ENCODE measurements at regions of chr1 and their contacts with region 1.

Region 1: DNA sequence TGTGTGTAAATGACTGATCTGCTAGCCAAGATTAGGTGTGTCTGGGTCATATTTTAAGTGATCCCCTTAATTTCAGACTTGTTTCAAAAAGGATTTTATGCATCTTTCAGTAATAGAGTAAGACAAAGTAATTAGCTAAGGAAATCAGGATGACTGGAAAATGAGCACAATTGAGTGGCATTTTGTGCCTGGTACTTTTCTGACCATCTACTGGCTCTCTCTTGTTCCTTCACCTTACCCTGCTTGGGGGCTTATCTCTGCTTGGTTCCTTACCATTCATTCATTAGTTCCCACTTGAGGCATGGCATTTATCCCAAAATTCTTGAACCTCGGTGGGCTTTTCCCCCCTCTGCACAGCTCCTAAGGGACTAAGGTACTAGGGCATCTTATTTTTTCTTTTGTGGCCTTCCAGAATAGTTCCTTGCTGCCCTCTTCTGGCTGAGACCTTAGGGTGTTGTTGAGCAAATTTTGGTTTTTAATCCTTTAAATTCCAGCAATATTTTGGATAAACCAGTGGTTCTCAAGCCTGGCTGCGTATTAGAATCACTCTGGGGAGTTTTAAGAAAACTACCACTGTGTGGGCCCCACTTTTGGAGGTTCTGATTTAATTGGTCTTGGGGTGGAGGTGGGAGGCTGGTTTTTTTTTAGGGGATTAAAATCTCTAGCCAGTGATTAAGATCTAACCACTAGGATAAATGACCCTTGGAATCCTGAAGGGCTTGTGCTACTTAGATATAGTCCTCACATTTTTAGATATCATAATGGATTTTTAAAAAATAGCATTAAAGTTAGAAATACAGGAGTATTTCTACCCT is 50.8 kb downstream of the HS2ST1 start:
- DNase-seq: peak; percentile 23
- ATAC-seq: peak; percentile 72
- H3K4me3 ChIP-seq: no peak overlapping the region
- H3K27ac ChIP-seq: no peak overlapping the region
- H3K4me1 ChIP-seq: no peaks in the 10 kb centered on the region
- H3K27me3 ChIP-seq: no peaks in the 10 kb centered on the region
- CTCF ChIP-seq: peak; percentile 54 to 77 (median 72); a peak in 5 of 6 replicates
- POLR2A ChIP-seq: no peak
- RAD21 ChIP-seq: peak; percentile 81

Region 2: DNA sequence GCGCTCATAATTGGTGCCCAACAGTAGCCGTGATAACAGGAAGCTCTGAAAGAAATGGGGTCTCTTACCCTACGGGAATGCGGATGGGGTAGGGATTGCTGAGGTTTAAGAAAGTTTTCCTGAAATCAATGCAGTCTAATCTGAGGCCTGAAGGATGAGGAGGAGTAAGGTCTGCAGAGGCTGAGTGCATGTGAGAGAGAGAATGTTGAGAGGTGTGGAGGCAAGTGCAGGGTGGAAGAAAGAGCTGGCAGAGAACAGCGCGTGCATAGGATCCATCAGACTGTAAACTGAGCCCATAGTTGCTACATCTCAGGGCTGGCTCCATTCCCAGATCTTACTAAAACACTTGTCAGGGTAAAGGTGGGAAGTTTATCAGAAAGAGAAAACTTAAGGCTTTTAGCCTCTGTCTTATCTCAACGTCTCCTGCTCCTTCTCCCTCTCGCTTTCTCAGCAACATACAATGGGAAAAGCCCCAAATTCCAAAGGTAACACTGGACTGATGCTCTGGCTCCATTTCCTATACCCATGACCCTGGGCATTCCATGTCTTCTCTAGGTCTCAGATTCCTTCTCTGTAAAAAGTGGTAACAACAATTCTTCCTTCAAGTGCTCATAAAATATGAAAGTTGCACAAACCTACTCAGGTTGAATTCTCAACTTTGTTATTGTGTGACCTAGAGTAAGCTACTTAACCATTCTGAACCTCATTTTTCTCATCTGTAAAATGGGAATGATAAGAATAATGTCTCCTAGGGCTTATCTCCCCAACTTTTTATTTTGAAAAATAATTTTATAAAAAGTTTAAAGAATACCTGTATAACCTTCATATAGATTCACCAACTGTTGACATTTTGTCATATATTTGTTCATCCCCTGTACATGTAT is 185.7 kb before region 1 on chr1:
- CTCF ChIA-PET with region 1: interaction called, 11 read pairs
- POLR2A ChIA-PET with region 1: no interaction called
- RAD21 ChIA-PET with region 1: interaction called in 1 of 2 experiments, 3 read pairs
- intact Hi-C with region 1: loop called (anchors 1 kb)
- DNase-seq: no peak
- ATAC-seq: no peak
- H3K4me3 ChIP-seq: no peak overlapping the region
- H3K27ac ChIP-seq: no peak overlapping the region
- H3K4me1 ChIP-seq: peaks cover 10 to 17% of the 10 kb centered on the region in 2 experiments; a peak in 3 of 4 replicates
- H3K27me3 ChIP-seq: no peaks in the 10 kb centered on the region
- CTCF ChIP-seq: no peak
- POLR2A ChIP-seq: no peak
- RAD21 ChIP-seq: no peak

Region 3: GRCh38 chr1:86833461-86834215 is 131.6 kb before region 1 on chr1:
- CTCF ChIA-PET with region 1: interaction called, 15 read pairs
- POLR2A ChIA-PET with region 1: no interaction called
- RAD21 ChIA-PET with region 1: no interaction called
- intact Hi-C with region 1: loop called (anchors 1 kb)
- DNase-seq: peak; percentile 79
- ATAC-seq: peak; percentile 98
- H3K4me3 ChIP-seq: no peak overlapping the region
- H3K27ac ChIP-seq: no peak overlapping the region
- H3K4me1 ChIP-seq: no peaks in the 10 kb centered on the region; a peak in 1 of 4 replicates
- H3K27me3 ChIP-seq: no peaks in the 10 kb centered on the region
- CTCF ChIP-seq: peak; percentile 43 to 80 (median 66)
- POLR2A ChIP-seq: no peak
- RAD21 ChIP-seq: peak; percentile 85

Region 4: DNA sequence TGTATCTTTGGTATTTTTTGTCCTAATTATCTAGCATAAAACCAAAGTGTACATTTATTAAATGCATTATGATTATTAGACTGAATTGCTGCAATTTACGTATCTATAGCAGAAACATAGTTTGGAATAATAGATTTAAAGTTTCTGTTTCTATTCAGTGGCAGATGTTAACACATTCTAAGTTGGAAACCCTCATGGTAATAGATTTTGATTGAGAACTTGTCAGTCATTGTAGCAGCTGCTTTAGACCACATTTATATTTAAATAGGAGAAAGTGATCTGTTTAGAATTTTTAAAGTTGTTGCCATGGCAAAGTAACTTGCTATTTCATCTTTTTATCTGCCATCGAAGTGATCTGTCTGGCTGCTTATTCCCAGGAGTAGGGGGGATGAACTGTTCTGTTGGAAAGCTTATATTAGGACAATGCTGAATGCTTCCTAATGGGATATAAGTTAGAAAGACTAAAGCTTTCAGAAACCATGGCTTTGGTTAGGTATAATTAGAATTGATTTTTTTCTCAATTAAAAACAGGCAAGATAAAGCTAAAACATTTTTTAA is 10.9 kb after region 1 on chr1:
- CTCF ChIA-PET with region 1: interaction called, 11 read pairs
- POLR2A ChIA-PET with region 1: no interaction called
- RAD21 ChIA-PET with region 1: no interaction called
- intact Hi-C with region 1: no loop called
- DNase-seq: no peak
- ATAC-seq: no peak
- H3K4me3 ChIP-seq: no peak overlapping the region
- H3K27ac ChIP-seq: no peak overlapping the region
- H3K4me1 ChIP-seq: no peaks in the 10 kb centered on the region; a peak in 1 of 4 replicates
- H3K27me3 ChIP-seq: no peaks in the 10 kb centered on the region
- CTCF ChIP-seq: no peak
- POLR2A ChIP-seq: no peak
- RAD21 ChIP-seq: no peak